Left colon (tissue), 2 donors: ENCODE measurements at regions of chr2 and their contacts with region 1.

Region 1: GRCh38 chr2:152335010-152335725 is at the start of gene FMNL2:
- DNase-seq: peak; percentile 86 to 87
- ATAC-seq: peak; percentile 87
- total RNA-seq, gene FMNL2: 14.8 to 14.9 TPM

Region 2: DNA sequence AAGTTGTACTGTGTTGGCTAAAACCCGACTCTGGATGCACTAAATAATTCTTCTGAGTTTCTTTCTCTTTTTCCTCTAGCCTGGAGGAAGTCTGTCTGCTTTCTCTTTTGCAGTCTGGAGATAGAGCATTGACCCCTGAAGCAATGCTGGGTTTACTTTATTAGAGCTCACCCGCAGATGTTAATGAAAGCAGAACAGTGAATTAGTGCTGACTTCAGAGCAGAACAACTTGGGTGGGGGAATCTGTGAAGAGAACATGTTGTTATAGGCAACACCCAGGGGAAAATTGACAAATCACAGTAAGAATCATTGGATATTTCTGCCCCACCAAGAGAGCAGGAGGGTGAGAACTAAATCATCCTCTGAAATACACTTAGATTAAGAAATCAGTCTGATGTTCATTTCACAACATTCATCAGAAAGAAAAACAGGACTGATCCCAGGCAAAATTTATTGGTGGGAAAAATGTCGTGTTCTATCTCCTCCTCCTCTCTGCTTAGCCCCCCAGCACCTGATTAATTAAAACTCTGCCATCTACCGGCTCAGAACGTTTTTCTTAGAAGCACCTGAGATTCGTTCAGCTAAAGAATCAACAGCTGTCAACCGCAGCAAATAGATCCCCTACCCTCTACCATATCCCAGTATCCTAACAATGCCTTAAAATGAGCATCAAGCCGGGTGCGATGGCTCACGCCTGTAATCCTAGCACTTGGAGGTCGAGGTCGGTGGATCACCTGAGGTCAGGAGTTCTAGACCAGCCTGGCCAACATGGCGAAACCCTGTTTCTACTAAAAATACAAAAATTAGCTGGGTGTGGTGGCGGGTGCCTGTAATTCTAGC is 164.9 kb after region 1 on chr2:
- intact Hi-C with region 1: no loop called
- DNase-seq: no peak
- ATAC-seq: no peak

Region 3: GRCh38 chr2:152555048-152555447 is 219.9 kb after region 1 on chr2:
- intact Hi-C with region 1: no loop called
- DNase-seq: no peak
- ATAC-seq: no peak

Region 4: GRCh38 chr2:152627351-152627957 is 292.3 kb after region 1 on chr2:
- intact Hi-C with region 1: loop called in 1 of 2 experiments (anchors 10 kb)
- DNase-seq: no peak
- ATAC-seq: peak; percentile 79